ENCODE measurements at regions of chr3 and their contacts with region 1.

Region 1: DNA sequence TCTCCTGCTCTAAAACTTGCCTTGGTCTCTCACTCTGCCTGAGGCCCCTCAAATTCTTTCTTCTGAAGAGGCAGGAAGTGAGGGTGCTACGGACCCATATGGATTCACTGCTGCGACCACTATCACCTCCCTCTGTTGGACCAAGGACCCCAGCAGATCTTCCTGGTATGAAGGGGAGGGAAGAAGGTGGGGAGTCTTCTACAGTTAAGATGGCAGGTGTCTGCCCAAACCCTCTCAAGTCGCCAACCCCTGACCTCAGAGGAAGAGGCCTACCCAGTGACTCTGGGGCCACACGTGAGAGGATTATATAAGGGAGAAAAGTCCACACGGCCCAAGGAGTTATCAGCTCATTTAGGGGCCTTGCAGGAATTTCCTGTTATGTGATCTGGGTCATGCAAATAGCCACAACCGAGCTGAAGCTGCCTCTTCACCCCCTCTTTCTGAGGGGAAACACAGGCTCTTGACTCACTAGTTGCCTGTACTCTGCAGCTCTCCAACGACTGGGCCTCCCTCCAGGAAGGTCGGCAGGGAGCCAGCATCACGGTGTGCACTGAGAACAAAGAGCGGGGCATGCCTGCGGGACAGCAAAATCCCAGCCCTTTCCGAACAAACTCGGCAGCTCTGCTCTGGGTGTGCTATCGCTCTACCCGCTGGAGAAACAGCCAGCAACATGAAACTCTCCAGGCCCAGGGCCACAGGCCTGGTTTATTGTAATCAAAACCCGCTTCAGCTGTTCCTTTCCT is 116.0 kb downstream of the XXYLT1 start:
- DNase-seq: peak; percentile 66
- ATAC-seq: peak; percentile 45
- H3K4me3 ChIP-seq: peak overlapping the region in 1 of 5 experiments; percentile 35
- H3K4me3 Mint-ChIP-seq: peak overlapping the region; percentile 78
- H3K27ac ChIP-seq: peak overlapping the region; percentile 31 to 55
- H3K27ac Mint-ChIP-seq: peak overlapping the region; percentile 94
- H3K4me1 ChIP-seq: peaks cover 66 to 83% of the 10 kb centered on the region in 2 donors
- H3K4me1 Mint-ChIP-seq: peaks cover 91% of the 10 kb centered on the region
- H3K27me3 ChIP-seq: no peaks in the 10 kb centered on the region
- H3K27me3 Mint-ChIP-seq: no peaks in the 10 kb centered on the region
- CTCF ChIP-seq: no peak

Region 2: GRCh38 chr3:195133462-195133861 is 21.5 kb before region 1 on chr3:
- CTCF ChIA-PET with region 1: interaction called, 7 read pairs
- POLR2A ChIA-PET with region 1: interaction called, 10 read pairs
- intact Hi-C with region 1: loop called (anchors 1 kb)
- DNase-seq: peak; percentile 66
- ATAC-seq: no peak
- H3K4me3 ChIP-seq: no peak overlapping the region
- H3K4me3 Mint-ChIP-seq: peak overlapping the region; percentile 37
- H3K27ac ChIP-seq: no peak overlapping the region
- H3K27ac Mint-ChIP-seq: peak overlapping the region; percentile 60
- H3K4me1 ChIP-seq: peaks cover 16 to 22% of the 10 kb centered on the region in 2 donors
- H3K4me1 Mint-ChIP-seq: peaks cover 37% of the 10 kb centered on the region
- H3K27me3 ChIP-seq: no peaks in the 10 kb centered on the region
- H3K27me3 Mint-ChIP-seq: no peaks in the 10 kb centered on the region
- CTCF ChIP-seq: no peak

Region 3: GRCh38 chr3:195187609-195188425 is 32.9 kb after region 1 on chr3:
- CTCF ChIA-PET with region 1: interaction called, 3 read pairs
- POLR2A ChIA-PET with region 1: no interaction called
- intact Hi-C with region 1: loop called (anchors 5 kb)
- DNase-seq: no peak
- ATAC-seq: no peak
- H3K4me3 ChIP-seq: no peak overlapping the region
- H3K4me3 Mint-ChIP-seq: no peak overlapping the region
- H3K27ac ChIP-seq: no peak overlapping the region
- H3K27ac Mint-ChIP-seq: no peak overlapping the region
- H3K4me1 ChIP-seq: peaks cover 6 to 18% of the 10 kb centered on the region in 2 donors
- H3K4me1 Mint-ChIP-seq: peaks cover 23% of the 10 kb centered on the region
- H3K27me3 ChIP-seq: no peaks in the 10 kb centered on the region
- H3K27me3 Mint-ChIP-seq: no peaks in the 10 kb centered on the region
- CTCF ChIP-seq: no peak